Natural killer cell (primary cell): ENCODE measurements at regions of chr5 and their contacts with region 1.

Region 1: GRCh38 chr5:149141224-149141956 is at the start of gene ABLIM3:
- DNase-seq: peak; percentile 74 to 79
- ATAC-seq: peak; percentile 92 to 99 (median 98)
- H3K4me3 ChIP-seq: peak within 1 kb of the TSS; percentile 20
- H3K4me3 Mint-ChIP-seq: peak within 1 kb of the TSS; percentile 68
- H3K27ac ChIP-seq: no peak within 1 kb of the TSS
- H3K27ac Mint-ChIP-seq: no peak within 1 kb of the TSS
- H3K4me1 ChIP-seq: peaks cover 6% of the 10 kb centered on the region
- H3K4me1 Mint-ChIP-seq: peaks cover 0 to 4% of the 10 kb centered on the region in 2 donors
- H3K27me3 ChIP-seq: peaks cover 10% of the 10 kb centered on the region
- H3K27me3 Mint-ChIP-seq: peaks cover 40 to 58% of the 10 kb centered on the region in 2 donors
- CTCF ChIP-seq: peak; percentile 88
- total RNA-seq, gene ABLIM3: 0.41 to 2.4 (median 1.2) TPM

Region 2: GRCh38 chr5:149153751-149154610 is 12.6 kb after region 1 on chr5:
- intact Hi-C with region 1: no loop called
- DNase-seq: no peak
- ATAC-seq: no peak
- H3K4me3 ChIP-seq: no peak overlapping the region
- H3K4me3 Mint-ChIP-seq: no peak overlapping the region
- H3K27ac ChIP-seq: no peak overlapping the region
- H3K27ac Mint-ChIP-seq: no peak overlapping the region
- H3K4me1 ChIP-seq: no peaks in the 10 kb centered on the region
- H3K4me1 Mint-ChIP-seq: no peaks in the 10 kb centered on the region
- H3K27me3 ChIP-seq: no peaks in the 10 kb centered on the region
- H3K27me3 Mint-ChIP-seq: peaks cover 10 to 13% of the 10 kb centered on the region in 2 donors
- CTCF ChIP-seq: no peak

Region 3: DNA sequence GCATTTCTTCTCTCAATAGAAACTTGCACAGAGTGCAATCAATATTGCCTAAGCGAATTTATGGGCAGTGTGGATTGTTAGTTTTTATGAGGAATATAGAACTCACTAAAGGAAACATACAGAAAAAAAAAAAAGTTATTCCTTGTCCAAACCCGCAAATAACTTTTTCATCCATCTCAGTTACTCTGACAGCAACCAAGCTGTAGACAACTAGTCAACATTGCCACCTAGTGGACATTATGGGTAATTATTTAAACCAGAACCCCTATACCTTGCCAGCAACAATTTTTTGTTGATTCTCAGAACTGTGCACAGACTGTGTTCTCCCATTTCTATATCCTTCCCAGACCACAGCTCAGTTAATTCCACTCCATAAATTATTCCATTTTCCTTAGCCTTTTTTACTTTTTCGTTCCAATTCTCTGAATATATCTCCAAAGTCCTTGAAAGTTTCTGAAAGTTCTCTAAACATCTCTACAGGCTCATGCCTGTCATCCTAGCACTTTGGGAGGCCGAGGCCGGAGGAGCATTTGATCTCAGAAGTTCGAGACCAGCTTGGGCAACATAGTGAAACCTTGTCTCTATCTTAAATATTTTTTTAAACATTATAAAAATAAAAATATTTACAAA is 127.7 kb after region 1 on chr5:
- intact Hi-C with region 1: loop called (anchors 1 kb)
- DNase-seq: peak in 1 of 2 donors; percentile 70
- ATAC-seq: peak; percentile 74 to 77 (median 75)
- H3K4me3 ChIP-seq: no peak overlapping the region
- H3K4me3 Mint-ChIP-seq: no peak overlapping the region
- H3K27ac ChIP-seq: no peak overlapping the region
- H3K27ac Mint-ChIP-seq: no peak overlapping the region
- H3K4me1 ChIP-seq: peaks cover 13% of the 10 kb centered on the region
- H3K4me1 Mint-ChIP-seq: peaks cover 5 to 16% of the 10 kb centered on the region in 2 donors
- H3K27me3 ChIP-seq: peaks cover 12% of the 10 kb centered on the region
- H3K27me3 Mint-ChIP-seq: peaks cover 28 to 29% of the 10 kb centered on the region in 2 donors
- CTCF ChIP-seq: peak; percentile 83

Region 4: DNA sequence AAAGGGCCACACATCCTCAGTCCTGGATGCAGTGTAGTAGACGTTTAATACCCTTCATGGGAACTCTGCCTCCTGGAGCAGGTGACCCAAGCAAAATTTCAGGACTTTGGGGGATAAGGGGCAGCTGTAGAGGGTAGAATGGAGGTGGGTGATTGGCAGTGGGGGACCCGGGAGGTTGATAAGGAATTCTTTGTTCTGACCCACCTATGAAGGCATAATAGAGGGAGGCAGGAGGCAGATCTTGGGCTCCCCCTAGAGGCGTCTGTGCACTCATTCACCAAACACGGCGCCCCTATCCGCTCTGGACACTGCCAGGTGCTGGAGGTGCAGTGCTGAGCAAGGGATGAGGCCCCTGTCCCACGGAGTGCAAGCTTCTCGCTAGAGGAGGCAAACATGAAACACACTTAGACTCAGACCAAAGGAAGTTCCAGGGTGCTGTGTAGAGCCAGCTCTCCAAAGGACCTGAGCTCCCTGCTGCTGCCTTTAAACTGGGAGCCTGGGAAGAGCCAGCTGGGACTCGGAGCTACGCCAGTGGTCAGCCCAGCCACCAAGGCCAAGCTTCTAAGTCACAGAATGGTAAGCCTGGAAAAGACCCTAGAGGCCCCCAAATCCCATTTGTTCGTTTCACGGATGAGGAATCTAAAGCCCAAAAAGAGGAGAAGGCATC is 230.0 kb after region 1 on chr5:
- intact Hi-C with region 1: loop called (anchors 5 kb)
- DNase-seq: peak; percentile 53 to 86
- ATAC-seq: peak; percentile 85 to 96 (median 93)
- H3K4me3 ChIP-seq: no peak overlapping the region
- H3K4me3 Mint-ChIP-seq: no peak overlapping the region
- H3K27ac ChIP-seq: no peak overlapping the region
- H3K27ac Mint-ChIP-seq: no peak overlapping the region
- H3K4me1 ChIP-seq: peaks cover 2% of the 10 kb centered on the region
- H3K4me1 Mint-ChIP-seq: no peaks in the 10 kb centered on the region
- H3K27me3 ChIP-seq: no peaks in the 10 kb centered on the region
- H3K27me3 Mint-ChIP-seq: no peaks in the 10 kb centered on the region
- CTCF ChIP-seq: peak; percentile 78

Region 5: GRCh38 chr5:150122158-150122510 is 980.7 kb after region 1 on chr5:
- intact Hi-C with region 1: no loop called
- DNase-seq: peak in 1 of 2 donors; percentile 20
- ATAC-seq: peak in 1 of 3 donors; percentile 54
- H3K4me3 ChIP-seq: no peak overlapping the region
- H3K4me3 Mint-ChIP-seq: no peak overlapping the region
- H3K27ac ChIP-seq: no peak overlapping the region
- H3K27ac Mint-ChIP-seq: no peak overlapping the region
- H3K4me1 ChIP-seq: peaks cover 8% of the 10 kb centered on the region
- H3K4me1 Mint-ChIP-seq: peaks cover 4 to 5% of the 10 kb centered on the region in 2 donors
- H3K27me3 ChIP-seq: no peaks in the 10 kb centered on the region
- H3K27me3 Mint-ChIP-seq: no peaks in the 10 kb centered on the region
- CTCF ChIP-seq: no peak